AG04449 (cell line): ENCODE measurements at regions of chr1 and their contacts with region 1.

Region 1: GRCh38 chr1:211578640-211579433 is at the start of gene SLC30A1:
- DNase-seq: peak; percentile 86
- H3K4me3 ChIP-seq: peak within 1 kb of the TSS; percentile 93
- CTCF ChIP-seq: no peak

Region 2: DNA sequence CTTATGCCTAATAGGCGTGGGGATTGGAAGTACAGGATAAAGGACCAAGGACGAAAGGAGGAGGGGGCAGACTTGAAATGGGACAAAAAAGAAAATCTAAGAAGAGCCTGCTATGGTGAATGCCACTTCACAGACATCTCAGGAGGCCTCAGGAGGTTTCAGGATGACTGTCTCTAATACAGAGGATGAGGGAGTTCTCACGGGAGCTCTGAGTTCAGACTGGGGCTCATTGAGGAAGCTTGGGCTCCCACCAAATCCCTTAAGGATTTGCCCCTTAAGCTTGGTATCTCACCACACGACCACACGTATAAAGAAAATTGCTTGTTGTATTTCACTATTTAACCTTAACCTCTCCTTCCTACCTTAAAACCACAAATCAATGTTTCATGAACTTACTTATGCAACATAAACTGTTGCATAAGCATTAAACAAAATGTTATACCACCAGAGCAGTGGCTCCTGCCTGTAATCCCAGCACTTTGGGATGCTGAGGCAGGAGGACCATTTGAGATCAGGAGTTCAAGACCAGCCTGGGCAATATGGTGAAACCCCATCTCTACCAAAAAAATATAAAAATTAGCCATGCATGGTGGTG is 12.3 kb before region 1 on chr1:
- CTCF ChIA-PET with region 1: no interaction called
- POLR2A ChIA-PET with region 1: no interaction called
- DNase-seq: no peak
- H3K4me3 ChIP-seq: no peak overlapping the region
- CTCF ChIP-seq: no peak

Region 3: DNA sequence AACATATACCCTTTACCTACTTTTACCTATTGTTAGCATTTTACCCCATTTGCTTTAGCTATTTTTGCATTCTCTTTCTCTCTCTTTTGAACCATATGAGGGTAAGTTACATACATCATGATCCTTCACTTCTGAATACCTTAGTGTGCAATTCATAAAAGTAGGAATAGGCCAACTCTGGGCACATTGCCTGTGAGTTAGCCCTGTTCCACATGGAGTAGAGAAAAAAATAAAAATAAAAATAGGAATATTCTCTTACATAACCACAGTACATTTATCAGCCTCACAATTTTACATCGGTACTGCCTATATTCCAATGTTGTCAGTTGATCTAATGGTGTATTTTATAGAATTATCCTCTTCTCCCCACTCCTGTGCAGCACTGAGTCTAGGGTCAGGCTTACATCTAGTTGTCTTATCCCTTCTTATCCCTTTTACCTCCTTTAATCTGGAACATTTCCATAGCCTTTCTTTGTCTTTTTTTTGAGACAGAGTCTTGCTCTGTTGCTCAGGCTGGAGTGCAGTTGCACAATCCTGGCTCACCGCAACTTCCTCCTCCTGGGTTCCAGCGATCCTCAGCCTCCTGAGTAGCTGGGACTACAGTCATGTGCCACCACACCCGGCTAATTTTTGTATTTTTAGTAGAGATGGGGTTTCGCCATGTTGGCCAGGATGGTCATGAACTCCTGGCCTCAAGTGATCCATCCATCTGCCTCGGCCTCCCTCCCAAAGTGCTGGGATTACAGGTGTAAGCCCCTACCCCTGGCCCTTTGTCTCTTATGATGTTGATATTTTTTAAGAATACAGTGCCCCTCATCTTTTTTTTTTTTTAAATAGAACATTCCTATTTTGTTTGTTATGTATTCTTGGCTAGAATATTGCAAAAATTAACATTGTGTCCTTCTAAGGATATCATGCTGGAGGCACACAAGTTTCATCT is 11.2 kb after region 1 on chr1:
- CTCF ChIA-PET with region 1: interaction called, 13 read pairs
- POLR2A ChIA-PET with region 1: interaction called, 3 read pairs
- DNase-seq: no peak
- H3K4me3 ChIP-seq: no peak overlapping the region
- CTCF ChIP-seq: no peak